Cardiac septum (tissue), 1 donor: ENCODE measurements at regions of chr17 and their contacts with region 1.

Region 1: GRCh38 chr17:35432176-35433074 is at the start of gene SLFN12:
- DNase-seq: no peak
- total RNA-seq, gene SLFN12: 4.3 TPM

Region 2: GRCh38 chr17:35242805-35243560 is 189.4 kb before region 1 on chr17 and contains the start of gene SLFN5:
- intact Hi-C with region 1: loop called (anchors 5 kb)
- DNase-seq: peak; percentile 97
- total RNA-seq, gene SLFN5: 13.8 TPM

Region 3: DNA sequence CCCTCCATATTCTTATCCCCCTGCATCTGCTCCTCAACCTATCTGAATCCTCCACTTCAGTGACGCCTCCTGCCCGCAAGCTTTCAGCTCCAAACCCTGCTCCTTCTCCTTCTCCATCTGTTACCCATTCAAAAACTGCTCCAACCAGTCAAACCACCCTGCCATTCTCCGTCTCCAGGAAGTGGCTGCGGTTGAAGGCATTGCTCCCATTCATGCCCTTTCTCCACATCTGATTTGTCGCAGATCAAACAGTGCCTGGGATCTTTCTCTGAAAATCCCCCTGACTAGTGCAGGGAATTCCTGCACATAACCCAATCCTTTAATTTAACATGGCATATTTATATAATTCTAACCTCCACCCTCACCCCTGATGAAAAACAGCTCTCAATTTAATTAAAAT is 133.3 kb before region 1 on chr17:
- intact Hi-C with region 1: no loop called
- DNase-seq: no peak

Region 4: GRCh38 chr17:35390663-35391062 is 41.8 kb before region 1 on chr17:
- intact Hi-C with region 1: no loop called
- DNase-seq: no peak